Activated CD4-positive, alpha-beta T cell treated with anti-CD3 and anti-CD28 coated beads, Interleukin-2, amount 10 ng/mL, durations not matched to agents 7 days and 5 days (primary cell): ENCODE measurements at regions of chr9 and their contacts with region 1.

Region 1: GRCh38 chr9:35603987-35604577 is 980 bp upstream of the TESK1 start:
- DNase-seq: peak; percentile 100
- H3K4me3 Mint-ChIP-seq: peak overlapping the region; percentile 91
- H3K27ac Mint-ChIP-seq: peak overlapping the region; percentile 97
- H3K4me1 Mint-ChIP-seq: peaks cover 37% of the 10 kb centered on the region
- H3K27me3 Mint-ChIP-seq: no peaks in the 10 kb centered on the region

Region 2: DNA sequence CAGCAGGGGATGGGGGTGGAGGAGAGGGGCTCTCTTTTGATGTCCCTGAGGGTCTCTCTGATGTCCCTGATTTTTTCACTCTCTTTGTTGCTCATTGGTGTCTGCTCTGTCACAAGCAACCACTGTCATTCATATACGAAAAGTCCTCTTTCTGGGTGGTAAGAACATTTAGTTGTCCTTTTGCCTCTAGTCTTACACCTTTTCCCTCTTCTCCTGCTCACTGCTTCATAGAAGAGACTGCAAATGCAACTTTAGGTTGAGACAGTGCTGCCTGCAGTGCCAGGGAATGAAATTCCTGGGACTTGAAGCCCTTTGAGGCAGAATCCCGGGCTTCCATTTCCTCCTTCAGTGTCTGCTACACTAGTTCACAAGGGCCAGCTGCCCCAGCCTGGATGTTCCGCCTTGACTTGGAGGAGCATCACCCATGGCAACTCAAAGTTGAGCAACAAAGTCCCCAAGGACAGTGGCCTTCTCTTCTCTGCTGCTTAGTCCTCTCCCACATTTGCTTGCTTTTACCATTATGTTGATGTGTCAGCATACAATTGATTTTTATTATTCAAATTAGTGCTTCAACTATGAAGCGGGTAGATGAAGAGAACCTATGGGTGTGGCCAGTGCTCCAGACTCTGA is 208.9 kb before region 1 on chr9:
- CTCF ChIA-PET with region 1: no interaction called
- POLR2A ChIA-PET with region 1: no interaction called
- DNase-seq: no peak
- H3K4me3 Mint-ChIP-seq: no peak overlapping the region
- H3K27ac Mint-ChIP-seq: no peak overlapping the region
- H3K4me1 Mint-ChIP-seq: no peaks in the 10 kb centered on the region
- H3K27me3 Mint-ChIP-seq: peaks cover 3% of the 10 kb centered on the region

Region 3: DNA sequence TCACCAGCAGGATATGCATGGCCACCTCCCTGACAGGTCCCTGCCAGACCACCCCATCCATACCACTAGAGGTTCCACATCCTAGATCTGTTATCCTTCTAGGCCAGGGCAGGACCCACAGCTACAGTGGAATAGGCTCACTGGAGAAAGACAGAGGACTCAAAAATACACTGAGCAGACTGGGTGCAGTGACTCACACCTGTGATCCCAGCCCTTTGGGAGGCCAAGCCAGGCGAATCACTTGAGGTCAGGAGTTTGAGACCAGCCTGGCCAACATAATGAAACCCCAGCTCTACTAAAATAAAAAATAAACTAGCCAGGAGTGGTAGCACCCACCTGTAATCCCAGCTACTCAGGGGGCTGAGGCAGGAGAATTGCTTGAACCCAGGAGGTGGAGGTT is 55.5 kb before region 1 on chr9:
- CTCF ChIA-PET with region 1: no interaction called
- POLR2A ChIA-PET with region 1: no interaction called
- DNase-seq: no peak
- H3K4me3 Mint-ChIP-seq: no peak overlapping the region
- H3K27ac Mint-ChIP-seq: no peak overlapping the region
- H3K4me1 Mint-ChIP-seq: no peaks in the 10 kb centered on the region
- H3K27me3 Mint-ChIP-seq: no peaks in the 10 kb centered on the region

Region 4: DNA sequence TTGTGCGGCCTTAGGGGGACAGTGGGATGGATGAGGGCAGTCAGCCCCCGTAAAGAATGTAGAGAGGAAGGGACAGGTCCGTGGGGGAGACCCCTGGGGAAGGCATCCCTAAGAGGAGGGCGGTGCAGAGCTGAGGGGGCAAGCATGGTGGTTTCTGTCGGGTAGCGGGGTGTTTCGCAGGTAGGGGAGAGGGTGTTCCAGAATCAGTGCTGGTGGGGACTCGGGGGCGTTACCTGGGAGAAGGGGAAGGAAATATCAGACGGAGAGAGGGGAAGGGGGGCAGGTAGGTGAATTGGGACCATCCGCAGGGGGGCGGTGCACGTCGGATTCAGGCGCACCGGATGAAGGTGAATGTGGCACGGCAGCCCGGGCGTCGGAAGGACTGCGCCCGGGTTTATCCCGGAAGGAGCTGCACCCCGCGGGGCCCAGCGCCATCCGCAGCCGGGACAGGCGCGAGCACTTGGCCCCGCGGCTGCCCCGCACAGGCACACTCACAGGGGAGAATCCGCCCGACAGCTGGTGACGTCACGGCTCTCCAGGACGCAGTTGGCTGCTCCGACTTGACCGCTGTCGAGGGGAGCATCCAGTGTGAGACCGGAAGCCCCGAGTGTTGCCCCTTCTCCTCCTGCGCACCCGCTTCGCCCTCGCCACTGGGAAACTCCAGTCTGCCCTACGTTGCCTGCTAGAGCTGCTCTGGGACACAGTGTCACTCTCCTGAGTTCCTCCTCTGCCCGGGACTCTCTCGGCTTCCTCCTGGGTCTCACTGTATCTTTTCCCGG is 12.8 kb after region 1 on chr9:
- CTCF ChIA-PET with region 1: interaction called, 25 read pairs
- POLR2A ChIA-PET with region 1: no interaction called
- DNase-seq: peak; percentile 65
- H3K4me3 Mint-ChIP-seq: peak overlapping the region; percentile 75
- H3K27ac Mint-ChIP-seq: peak overlapping the region; percentile 85
- H3K4me1 Mint-ChIP-seq: peaks cover 45% of the 10 kb centered on the region
- H3K27me3 Mint-ChIP-seq: peaks cover 11% of the 10 kb centered on the region

Region 5: DNA sequence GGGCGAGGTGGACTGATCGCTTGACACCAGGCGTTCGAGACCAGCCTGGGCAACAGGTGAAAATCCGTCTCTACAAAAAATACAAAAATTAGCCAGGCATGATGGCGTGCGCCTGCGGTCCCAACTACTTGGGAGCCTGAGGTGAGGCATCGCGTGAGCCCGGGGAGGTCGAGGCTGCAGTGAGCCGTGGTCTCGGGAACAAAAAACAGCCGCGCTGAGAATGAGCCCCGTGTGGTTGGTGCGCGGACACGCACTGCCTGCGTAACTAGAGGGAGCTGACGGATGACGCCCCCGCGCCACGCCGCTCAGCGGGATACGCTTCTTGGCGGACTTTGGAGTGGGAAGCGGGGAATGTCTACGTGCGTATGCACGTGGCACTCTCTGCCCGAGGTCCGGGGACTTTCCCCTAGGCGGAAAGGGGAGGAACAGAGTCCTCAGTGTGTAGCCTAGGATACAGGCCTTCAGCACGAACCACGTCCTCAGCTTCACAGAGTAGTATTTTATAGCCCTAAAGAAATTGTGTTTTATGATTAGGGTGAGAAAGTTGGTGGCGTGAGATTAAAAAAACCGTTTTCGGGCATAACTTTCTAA is 53.6 kb after region 1 on chr9 and contains the start of gene RMRP:
- CTCF ChIA-PET with region 1: interaction called, 13 read pairs
- POLR2A ChIA-PET with region 1: no interaction called
- DNase-seq: peak; percentile 91
- H3K4me3 Mint-ChIP-seq: peak within 1 kb of the TSS; percentile 93
- H3K27ac Mint-ChIP-seq: peak within 1 kb of the TSS; percentile 99
- H3K4me1 Mint-ChIP-seq: peaks cover 64% of the 10 kb centered on the region
- H3K27me3 Mint-ChIP-seq: peaks cover 4% of the 10 kb centered on the region
- total RNA-seq, gene RMRP: 1,959 to 11,185 TPM